Esophagus squamous epithelium (tissue), 5 donors: ENCODE measurements at regions of chr7 and their contacts with region 1.

Region 1: GRCh38 chr7:113013761-113014449 is 72.7 kb downstream of the GPR85 start:
- DNase-seq: no peak
- H3K4me3 ChIP-seq: no peak overlapping the region
- H3K27ac ChIP-seq: no peak overlapping the region
- H3K4me1 ChIP-seq: peaks cover 0 to 5% (median 0%) of the 10 kb centered on the region in 3 donors
- H3K27me3 ChIP-seq: no peaks in the 10 kb centered on the region
- CTCF ChIP-seq: no peak
- POLR2A ChIP-seq: no peak

Region 2: DNA sequence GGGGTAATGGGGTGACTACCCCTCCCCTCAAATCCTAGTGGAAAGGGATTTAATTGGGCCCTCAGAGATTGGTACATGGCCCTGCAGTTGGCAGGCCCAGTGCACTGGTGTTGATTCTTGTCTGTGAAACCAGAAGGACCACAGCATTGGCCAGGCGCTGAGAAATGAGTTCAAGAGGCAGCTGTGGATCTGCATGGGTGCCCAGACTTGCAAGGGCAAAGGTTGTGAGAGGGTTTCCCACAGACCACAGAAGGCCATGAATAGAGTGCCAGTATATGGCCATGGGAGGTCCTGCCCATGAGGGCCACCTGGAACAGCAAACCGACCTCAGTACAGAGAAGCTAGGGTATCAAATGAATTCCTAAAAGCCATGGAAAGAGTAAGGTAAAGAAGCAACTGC is 256.6 kb before region 1 on chr7:
- intact Hi-C with region 1: no loop called
- DNase-seq: no peak
- H3K4me3 ChIP-seq: no peak overlapping the region
- H3K27ac ChIP-seq: no peak overlapping the region
- H3K4me1 ChIP-seq: no peaks in the 10 kb centered on the region
- H3K27me3 ChIP-seq: no peaks in the 10 kb centered on the region
- CTCF ChIP-seq: no peak
- POLR2A ChIP-seq: no peak

Region 3: DNA sequence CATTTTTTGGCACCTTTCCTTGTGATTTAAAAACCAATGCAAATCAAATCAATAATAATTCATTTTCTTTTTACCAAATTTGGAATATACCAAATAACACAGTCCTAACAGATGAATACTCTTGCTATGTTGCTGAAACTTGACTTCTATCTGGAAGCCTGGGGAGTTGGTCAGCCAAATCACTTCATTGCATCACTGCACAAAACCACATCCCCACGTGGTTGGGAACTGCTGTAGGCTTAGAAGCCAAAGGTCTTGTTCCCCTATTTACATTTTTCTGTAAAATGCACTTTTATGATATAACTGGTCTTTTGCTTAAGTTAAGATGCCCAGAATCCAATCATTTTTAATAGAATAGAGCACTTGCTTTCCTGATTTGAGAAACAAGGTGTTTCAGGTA is 57.6 kb after region 1 on chr7:
- intact Hi-C with region 1: no loop called
- DNase-seq: no peak
- H3K4me3 ChIP-seq: no peak overlapping the region
- H3K27ac ChIP-seq: no peak overlapping the region
- H3K4me1 ChIP-seq: no peaks in the 10 kb centered on the region
- H3K27me3 ChIP-seq: no peaks in the 10 kb centered on the region
- CTCF ChIP-seq: no peak
- POLR2A ChIP-seq: no peak

Region 4: GRCh38 chr7:113421696-113422330 is 407.9 kb after region 1 on chr7:
- intact Hi-C with region 1: loop called (anchors 5 kb)
- DNase-seq: peak; percentile 12
- H3K4me3 ChIP-seq: no peak overlapping the region
- H3K27ac ChIP-seq: no peak overlapping the region
- H3K4me1 ChIP-seq: peaks cover 0 to 5% (median 0%) of the 10 kb centered on the region in 3 donors
- H3K27me3 ChIP-seq: no peaks in the 10 kb centered on the region
- CTCF ChIP-seq: peak in 5 of 6 experiments; percentile 70 to 83 (median 78)
- POLR2A ChIP-seq: no peak